CD14-positive monocyte (primary cell): ENCODE measurements at regions of chr13 and their contacts with region 1.

Region 1: GRCh38 chr13:30865123-30866049 is 40.7 kb upstream of the MEDAG start:
- DNase-seq: peak; percentile 59 to 69 (median 69)
- H3K4me3 ChIP-seq: no peak overlapping the region
- H3K4me3 Mint-ChIP-seq: peak overlapping the region in 1 of 2 donors; percentile 27
- H3K27ac ChIP-seq: no peak overlapping the region
- H3K27ac Mint-ChIP-seq: peak overlapping the region in 2 of 7 donors; percentile 26 to 40
- H3K4me1 ChIP-seq: no peaks in the 10 kb centered on the region
- H3K4me1 Mint-ChIP-seq: peaks cover 9% of the 10 kb centered on the region
- H3K27me3 ChIP-seq: no peaks in the 10 kb centered on the region
- H3K27me3 Mint-ChIP-seq: peaks cover 4 to 16% (median 6%) of the 10 kb centered on the region in 3 donors
- CTCF ChIP-seq: peak; percentile 87

Region 2: DNA sequence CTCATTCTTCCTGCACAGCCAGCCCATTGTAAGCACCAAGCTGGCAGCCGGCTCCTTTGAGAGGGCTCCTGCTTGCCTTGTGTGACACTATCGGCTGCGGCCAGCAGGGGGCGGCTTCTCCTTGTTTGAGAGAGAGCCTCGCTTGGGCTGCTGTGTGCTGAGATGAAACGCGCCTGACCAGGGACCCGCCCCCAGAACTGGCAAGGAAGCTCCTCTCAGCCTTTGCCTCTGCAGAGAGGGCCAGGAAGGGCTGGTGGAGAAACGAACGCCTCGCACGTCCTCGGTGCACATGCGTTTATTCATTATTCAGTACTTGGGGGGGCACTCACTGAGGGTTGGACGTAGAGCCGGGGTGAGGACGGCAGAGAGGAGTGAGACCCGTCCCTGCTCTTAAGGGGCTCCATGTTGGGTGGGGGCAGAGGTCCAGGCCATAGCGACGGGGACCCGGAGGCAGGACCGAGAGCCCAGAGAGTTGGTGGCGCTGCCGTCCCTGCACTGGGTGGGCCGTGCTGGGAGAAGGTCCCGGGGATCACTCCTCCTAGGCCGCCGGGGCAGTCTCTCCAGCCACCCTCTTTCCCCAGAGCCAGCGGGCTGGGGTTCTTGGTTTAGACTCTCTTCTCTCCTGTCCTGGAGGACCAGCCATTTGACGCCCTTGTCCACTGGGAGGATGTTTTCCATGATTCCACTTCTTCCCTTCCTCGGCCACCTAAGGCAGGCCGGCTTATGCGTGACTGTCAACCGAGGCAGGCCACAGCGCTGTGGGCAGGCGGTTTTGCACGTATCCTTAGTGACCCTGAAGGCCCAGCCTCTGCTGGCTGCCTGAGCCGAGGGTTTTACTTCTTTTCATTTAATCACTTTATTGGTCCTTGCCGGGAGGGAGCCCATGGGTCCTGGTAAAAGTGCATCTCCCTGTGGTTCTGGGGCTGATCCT is 732.5 kb before region 1 on chr13:
- intact Hi-C with region 1: loop called (anchors 5 kb)
- DNase-seq: peak; percentile 70 to 76 (median 73)
- H3K4me3 ChIP-seq: no peak overlapping the region
- H3K4me3 Mint-ChIP-seq: peak overlapping the region in 1 of 2 donors; percentile 35
- H3K27ac ChIP-seq: no peak overlapping the region
- H3K27ac Mint-ChIP-seq: peak overlapping the region in 1 of 7 donors; percentile 6
- H3K4me1 ChIP-seq: no peaks in the 10 kb centered on the region
- H3K4me1 Mint-ChIP-seq: peaks cover 16% of the 10 kb centered on the region
- H3K27me3 ChIP-seq: no peaks in the 10 kb centered on the region
- H3K27me3 Mint-ChIP-seq: peaks cover 0 to 2% (median 2%) of the 10 kb centered on the region in 3 donors
- CTCF ChIP-seq: peak; percentile 94

Region 3: DNA sequence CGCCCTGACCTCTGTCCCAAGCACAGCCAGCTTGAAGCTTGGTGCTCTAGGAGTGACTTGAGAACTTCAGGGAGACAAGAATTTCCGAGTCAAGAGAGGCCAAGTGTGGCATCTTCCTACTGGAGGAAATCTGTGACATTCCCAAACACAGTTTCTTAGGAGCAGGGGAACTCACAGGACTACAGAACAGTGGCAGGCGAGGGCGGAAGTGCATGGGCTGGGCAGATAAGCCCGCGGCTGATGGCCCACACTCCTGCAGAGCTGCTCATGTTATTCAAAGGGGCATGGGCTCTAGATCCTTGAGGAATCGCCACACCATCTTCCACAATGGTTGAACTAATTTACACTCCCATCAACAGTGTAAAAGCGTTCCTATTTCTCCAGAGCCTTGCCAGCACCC is 726.9 kb before region 1 on chr13:
- intact Hi-C with region 1: loop called (anchors 5 kb)
- DNase-seq: no peak
- H3K4me3 ChIP-seq: no peak overlapping the region
- H3K4me3 Mint-ChIP-seq: no peak overlapping the region
- H3K27ac ChIP-seq: no peak overlapping the region
- H3K27ac Mint-ChIP-seq: no peak overlapping the region
- H3K4me1 ChIP-seq: no peaks in the 10 kb centered on the region
- H3K4me1 Mint-ChIP-seq: peaks cover 6% of the 10 kb centered on the region
- H3K27me3 ChIP-seq: no peaks in the 10 kb centered on the region
- H3K27me3 Mint-ChIP-seq: peaks cover 0 to 2% (median 0%) of the 10 kb centered on the region in 3 donors
- CTCF ChIP-seq: no peak

Region 4: DNA sequence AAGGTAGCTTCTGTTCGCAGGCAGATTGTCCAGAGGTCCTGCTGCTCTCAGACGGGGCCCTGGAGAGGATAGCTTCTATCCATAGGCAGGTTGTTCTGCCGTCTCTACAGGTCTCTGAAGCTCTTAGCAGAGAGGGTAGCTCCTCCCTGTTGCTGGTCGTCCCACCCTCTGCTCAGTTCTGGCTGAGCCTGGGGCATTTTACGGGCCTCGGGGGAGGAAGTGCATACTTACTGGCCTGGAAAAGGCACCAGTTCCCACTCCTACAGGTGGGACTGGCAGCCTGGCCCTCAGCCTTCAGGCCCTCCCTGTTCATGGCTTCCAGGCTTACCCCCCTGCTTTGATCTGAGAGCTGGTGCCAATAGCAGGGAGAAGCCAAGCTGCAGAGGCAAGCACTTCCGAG is 205.4 kb before region 1 on chr13:
- intact Hi-C with region 1: loop called in 1 of 2 experiments (anchors 10 kb)
- DNase-seq: no peak
- H3K4me3 ChIP-seq: peak overlapping the region in 1 of 3 experiments; percentile 25
- H3K4me3 Mint-ChIP-seq: peak overlapping the region in 1 of 2 donors; percentile 72
- H3K27ac ChIP-seq: peak overlapping the region; percentile 21 to 60
- H3K27ac Mint-ChIP-seq: peak overlapping the region in 4 of 7 donors; percentile 59 to 94 (median 72)
- H3K4me1 ChIP-seq: peaks cover 38 to 51% of the 10 kb centered on the region in 2 donors
- H3K4me1 Mint-ChIP-seq: peaks cover 23% of the 10 kb centered on the region
- H3K27me3 ChIP-seq: no peaks in the 10 kb centered on the region
- H3K27me3 Mint-ChIP-seq: no peaks in the 10 kb centered on the region
- CTCF ChIP-seq: no peak

Region 5: DNA sequence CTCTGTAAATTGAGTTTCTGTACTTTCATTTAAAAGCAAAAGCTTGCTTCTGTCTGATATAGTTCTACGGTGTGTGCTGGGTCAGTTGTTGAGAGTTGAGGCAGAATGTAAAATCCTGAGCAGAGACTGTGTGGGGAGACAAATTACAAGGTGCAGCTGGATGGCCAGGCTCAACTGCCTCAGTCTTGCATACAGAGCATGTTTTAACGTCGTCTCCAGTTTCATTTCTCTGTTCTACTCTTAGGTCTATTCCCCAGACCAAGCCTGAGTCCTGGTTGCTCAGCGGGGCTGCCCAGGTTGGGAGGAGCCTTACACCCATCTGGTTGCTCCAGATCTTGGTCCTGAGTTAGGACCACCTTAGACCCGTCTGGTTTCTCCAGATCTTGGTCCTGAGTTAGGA is 13.7 kb before region 1 on chr13:
- intact Hi-C with region 1: no loop called
- DNase-seq: no peak
- H3K4me3 ChIP-seq: no peak overlapping the region
- H3K4me3 Mint-ChIP-seq: no peak overlapping the region
- H3K27ac ChIP-seq: no peak overlapping the region
- H3K27ac Mint-ChIP-seq: no peak overlapping the region
- H3K4me1 ChIP-seq: no peaks in the 10 kb centered on the region
- H3K4me1 Mint-ChIP-seq: peaks cover 5% of the 10 kb centered on the region
- H3K27me3 ChIP-seq: no peaks in the 10 kb centered on the region
- H3K27me3 Mint-ChIP-seq: peaks cover 3 to 10% (median 5%) of the 10 kb centered on the region in 3 donors
- CTCF ChIP-seq: no peak

Region 6: GRCh38 chr13:30978981-30979956 is 113.9 kb after region 1 on chr13:
- intact Hi-C with region 1: no loop called
- DNase-seq: peak in 1 of 3 donors; percentile 8
- H3K4me3 ChIP-seq: no peak overlapping the region
- H3K4me3 Mint-ChIP-seq: no peak overlapping the region
- H3K27ac ChIP-seq: no peak overlapping the region
- H3K27ac Mint-ChIP-seq: no peak overlapping the region
- H3K4me1 ChIP-seq: no peaks in the 10 kb centered on the region
- H3K4me1 Mint-ChIP-seq: no peaks in the 10 kb centered on the region
- H3K27me3 ChIP-seq: no peaks in the 10 kb centered on the region
- H3K27me3 Mint-ChIP-seq: peaks cover 9 to 15% (median 11%) of the 10 kb centered on the region in 3 donors
- CTCF ChIP-seq: peak; percentile 67

Region 7: DNA sequence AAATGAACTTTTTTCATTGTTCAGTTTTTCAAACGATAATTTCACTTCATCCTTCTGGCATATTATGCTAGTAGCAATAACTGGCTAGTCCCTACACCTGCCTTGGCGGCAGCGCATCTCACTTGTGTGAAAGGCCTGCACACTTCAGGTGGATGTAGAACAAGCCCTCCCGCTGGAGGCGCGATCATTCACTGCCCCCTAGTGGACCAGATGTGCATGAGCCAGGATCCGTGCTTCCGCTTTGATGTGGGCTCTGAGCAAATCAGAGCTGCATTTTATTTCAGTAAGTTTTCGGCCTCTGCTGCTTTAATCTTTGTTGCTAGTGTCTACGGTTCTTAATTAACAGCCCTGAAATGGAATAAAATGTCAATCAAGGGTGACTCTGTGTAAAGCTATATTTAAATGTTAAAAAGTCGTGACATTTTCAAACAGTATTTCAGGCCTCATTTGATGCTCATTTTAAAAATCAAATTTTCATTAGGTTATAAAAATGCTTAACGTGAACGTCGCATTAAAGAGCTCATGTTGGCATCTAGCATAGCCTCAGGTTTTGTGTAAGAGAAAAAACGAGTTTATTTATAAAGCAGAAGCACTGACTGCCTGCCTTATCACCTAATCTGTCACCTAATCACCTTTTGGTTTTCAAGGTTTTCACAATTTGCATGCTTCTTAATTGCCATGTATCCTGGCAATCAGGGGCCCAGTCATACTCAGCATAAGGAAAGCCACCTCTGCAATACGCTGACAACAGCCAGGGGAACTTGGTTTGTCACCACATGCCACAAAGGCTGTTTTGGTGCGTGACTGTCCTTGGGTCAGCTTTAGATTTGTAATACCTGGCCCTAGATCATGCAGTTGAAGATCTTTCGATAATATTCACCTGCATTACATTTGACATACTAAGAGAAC is 179.2 kb after region 1 on chr13:
- intact Hi-C with region 1: loop called in 1 of 2 experiments (anchors 10 kb)
- DNase-seq: peak; percentile 66 to 75 (median 68)
- H3K4me3 ChIP-seq: no peak overlapping the region
- H3K4me3 Mint-ChIP-seq: peak overlapping the region in 1 of 2 donors; percentile 61
- H3K27ac ChIP-seq: peak overlapping the region in 1 of 2 donors; percentile 75
- H3K27ac Mint-ChIP-seq: peak overlapping the region in 3 of 7 donors; percentile 11 to 90 (median 33)
- H3K4me1 ChIP-seq: peaks cover 20 to 31% of the 10 kb centered on the region in 2 donors
- H3K4me1 Mint-ChIP-seq: peaks cover 12% of the 10 kb centered on the region
- H3K27me3 ChIP-seq: peaks cover 3 to 18% of the 10 kb centered on the region in 2 donors
- H3K27me3 Mint-ChIP-seq: peaks cover 18 to 34% (median 24%) of the 10 kb centered on the region in 3 donors
- CTCF ChIP-seq: peak; percentile 95